Uterus (tissue), 4 donors: ENCODE measurements at regions of chr10 and their contacts with region 1.

Region 1: GRCh38 chr10:73848821-73849489 is 25.4 kb downstream of the CAMK2G start:
- DNase-seq: peak; percentile 88
- H3K4me3 ChIP-seq: no peak overlapping the region
- H3K27ac ChIP-seq: peak overlapping the region; percentile 94 to 98
- H3K4me1 ChIP-seq: peaks cover 4 to 23% of the 10 kb centered on the region in 2 donors
- H3K27me3 ChIP-seq: no peaks in the 10 kb centered on the region
- CTCF ChIP-seq: peak; percentile 98 to 100 (median 98)
- POLR2A ChIP-seq: no peak

Region 2: GRCh38 chr10:73879296-73880173 is 30.6 kb after region 1 on chr10:
- intact Hi-C with region 1: loop called (anchors 2 kb)
- DNase-seq: peak; percentile 79 to 83
- H3K4me3 ChIP-seq: no peak overlapping the region
- H3K27ac ChIP-seq: peak overlapping the region; percentile 7 to 35
- H3K4me1 ChIP-seq: peaks cover 0 to 7% of the 10 kb centered on the region in 2 donors
- H3K27me3 ChIP-seq: no peaks in the 10 kb centered on the region
- CTCF ChIP-seq: peak; percentile 92 to 99 (median 94)
- POLR2A ChIP-seq: peak in 1 of 2 donors; percentile 6